ENCODE measurements at regions of chr4 and their contacts with region 1.

Region 1: DNA sequence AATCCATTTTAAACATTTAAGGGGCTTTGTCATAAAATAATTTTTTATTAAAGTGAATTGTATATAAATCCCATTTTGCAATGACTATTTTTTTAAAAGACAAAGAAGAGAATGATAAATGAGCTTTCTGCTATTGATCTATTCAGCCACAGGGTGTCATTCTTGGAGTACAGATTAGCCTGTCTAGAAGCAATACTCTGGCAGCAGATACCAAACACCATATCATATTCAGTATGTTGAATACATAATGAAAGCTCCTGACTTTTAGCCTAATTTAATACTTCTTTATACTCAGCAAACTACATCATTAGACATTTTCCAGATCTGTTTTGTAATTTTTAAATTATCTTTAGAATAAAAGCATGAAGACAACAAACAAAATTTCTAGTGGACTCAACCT is 496.3 kb downstream of the PDGFC start:
- DNase-seq: peak; percentile 28
- H3K4me3 ChIP-seq: no peak overlapping the region
- CTCF ChIP-seq: peak; percentile 46

Region 2: GRCh38 chr4:156169011-156169410 is 306.3 kb before region 1 on chr4:
- CTCF ChIA-PET with region 1: interaction called, 55 read pairs
- POLR2A ChIA-PET with region 1: interaction called, 4 read pairs
- DNase-seq: peak; percentile 71
- H3K4me3 ChIP-seq: no peak overlapping the region
- CTCF ChIP-seq: peak; percentile 70

Region 3: DNA sequence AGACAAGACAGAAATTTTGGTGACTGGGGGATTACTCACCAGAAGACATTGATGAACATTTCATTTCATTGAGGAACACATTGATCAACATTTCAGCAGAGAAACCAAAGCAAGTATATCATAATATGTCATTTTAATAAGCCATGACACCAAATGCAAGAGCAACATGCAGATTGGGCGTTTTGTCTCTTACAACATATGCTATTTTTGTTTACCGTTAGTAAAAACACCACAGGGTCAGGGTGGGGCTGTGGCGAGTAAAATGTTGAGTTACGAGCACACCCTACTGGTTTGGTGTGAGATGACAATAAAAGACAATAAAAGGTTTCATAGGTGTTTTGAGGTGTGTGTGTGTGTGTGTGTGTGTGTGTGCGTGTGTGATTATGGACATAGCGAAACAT is 201.8 kb after region 1 on chr4:
- CTCF ChIA-PET with region 1: interaction called, 25 read pairs
- POLR2A ChIA-PET with region 1: interaction called, 3 read pairs
- DNase-seq: no peak
- H3K4me3 ChIP-seq: no peak overlapping the region
- CTCF ChIP-seq: peak; percentile 17

Region 4: DNA sequence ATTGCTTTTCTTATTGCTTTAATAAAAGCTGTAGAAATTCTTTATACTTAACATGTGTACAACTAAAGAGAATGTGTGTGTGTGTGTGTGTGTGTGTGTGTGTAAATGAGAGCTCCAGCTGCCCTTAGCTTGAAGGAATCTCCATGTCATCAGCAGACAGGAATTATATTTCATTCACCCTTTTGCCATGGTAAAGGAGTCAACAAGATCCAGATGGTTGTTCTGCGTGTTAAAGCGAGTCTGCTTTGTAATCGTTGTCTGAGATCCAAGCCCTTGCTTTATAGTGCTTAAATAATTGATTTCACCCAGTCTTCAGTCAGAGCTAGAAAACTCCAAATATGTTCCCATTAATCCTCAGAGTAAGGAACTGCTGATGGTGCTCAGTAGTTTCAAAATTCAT is 210.8 kb after region 1 on chr4:
- CTCF ChIA-PET with region 1: interaction called, 3 read pairs
- POLR2A ChIA-PET with region 1: interaction called, 11 read pairs
- DNase-seq: peak; percentile 100
- H3K4me3 ChIP-seq: no peak overlapping the region
- CTCF ChIP-seq: no peak

Region 5: GRCh38 chr4:157291071-157291470 is 815.7 kb after region 1 on chr4:
- CTCF ChIA-PET with region 1: interaction called, 15 read pairs
- POLR2A ChIA-PET with region 1: no interaction called
- DNase-seq: no peak
- H3K4me3 ChIP-seq: no peak overlapping the region
- CTCF ChIP-seq: peak; percentile 10